Activated CD4-positive, alpha-beta T cell treated with anti-CD3 and anti-CD28 coated beads for 36 hours (primary cell): ENCODE measurements at regions of chr21 and their contacts with region 1.

Region 1: GRCh38 chr21:14454016-14455009 is 71.4 kb upstream of the HSPA13 start:
- DNase-seq: no peak
- ATAC-seq: peak; percentile 25
- H3K4me3 Mint-ChIP-seq: no peak overlapping the region
- H3K27ac Mint-ChIP-seq: peak overlapping the region; percentile 77
- H3K4me1 Mint-ChIP-seq: peaks cover 40% of the 10 kb centered on the region
- H3K27me3 Mint-ChIP-seq: no peaks in the 10 kb centered on the region

Region 2: DNA sequence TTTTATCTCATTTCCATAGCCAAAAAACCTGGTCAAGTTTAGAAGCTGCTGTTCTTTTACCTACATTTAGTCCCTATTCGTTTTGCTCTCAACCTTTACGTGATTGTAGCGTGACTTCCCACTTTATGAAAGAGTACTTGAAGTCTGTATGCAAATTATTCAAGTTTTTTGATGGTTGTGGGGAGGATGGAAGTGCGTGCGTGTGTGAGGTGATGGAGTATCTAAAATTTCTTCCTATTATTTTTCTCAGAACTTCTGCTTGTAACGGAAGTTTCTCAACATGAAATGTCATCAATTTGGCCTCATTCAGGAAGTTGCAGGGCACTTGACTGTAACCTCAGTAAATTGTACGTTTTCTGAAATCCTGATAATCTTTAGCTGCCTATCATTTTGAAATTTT is 27.9 kb after region 1 on chr21:
- CTCF ChIA-PET with region 1: no interaction called
- POLR2A ChIA-PET with region 1: no interaction called
- intact Hi-C with region 1: loop called (anchors 2 kb)
- DNase-seq: peak; percentile 21
- ATAC-seq: peak; percentile 79
- H3K4me3 Mint-ChIP-seq: peak overlapping the region; percentile 42
- H3K27ac Mint-ChIP-seq: peak overlapping the region; percentile 90
- H3K4me1 Mint-ChIP-seq: peaks cover 51% of the 10 kb centered on the region
- H3K27me3 Mint-ChIP-seq: no peaks in the 10 kb centered on the region

Region 3: GRCh38 chr21:14487490-14488432 is 33.4 kb after region 1 on chr21:
- CTCF ChIA-PET with region 1: interaction called, 3 read pairs
- POLR2A ChIA-PET with region 1: no interaction called
- intact Hi-C with region 1: loop called in 1 of 2 experiments (anchors 2 kb)
- DNase-seq: no peak
- ATAC-seq: peak; percentile 72
- H3K4me3 Mint-ChIP-seq: no peak overlapping the region
- H3K27ac Mint-ChIP-seq: peak overlapping the region; percentile 68
- H3K4me1 Mint-ChIP-seq: peaks cover 56% of the 10 kb centered on the region
- H3K27me3 Mint-ChIP-seq: no peaks in the 10 kb centered on the region

Region 4: GRCh38 chr21:14523234-14523633 is 68.9 kb after region 1 on chr21:
- CTCF ChIA-PET with region 1: no interaction called
- POLR2A ChIA-PET with region 1: interaction called, 5 read pairs
- intact Hi-C with region 1: loop called in 1 of 2 experiments (anchors 2 kb)
- DNase-seq: peak; percentile 64
- ATAC-seq: peak; percentile 79
- H3K4me3 Mint-ChIP-seq: peak overlapping the region; percentile 59
- H3K27ac Mint-ChIP-seq: peak overlapping the region; percentile 91
- H3K4me1 Mint-ChIP-seq: peaks cover 62% of the 10 kb centered on the region
- H3K27me3 Mint-ChIP-seq: no peaks in the 10 kb centered on the region

Region 5: GRCh38 chr21:14533504-14534428 is 79.5 kb after region 1 on chr21:
- CTCF ChIA-PET with region 1: no interaction called
- POLR2A ChIA-PET with region 1: no interaction called
- intact Hi-C with region 1: loop called (anchors 2 kb)
- DNase-seq: peak; percentile 21
- ATAC-seq: peak; percentile 78
- H3K4me3 Mint-ChIP-seq: peak overlapping the region; percentile 83
- H3K27ac Mint-ChIP-seq: peak overlapping the region; percentile 100
- H3K4me1 Mint-ChIP-seq: peaks cover 80% of the 10 kb centered on the region
- H3K27me3 Mint-ChIP-seq: no peaks in the 10 kb centered on the region

Region 6: GRCh38 chr21:14567331-14568279 is 113.3 kb after region 1 on chr21:
- CTCF ChIA-PET with region 1: no interaction called
- POLR2A ChIA-PET with region 1: no interaction called
- intact Hi-C with region 1: no loop called
- DNase-seq: no peak
- ATAC-seq: no peak
- H3K4me3 Mint-ChIP-seq: no peak overlapping the region
- H3K27ac Mint-ChIP-seq: no peak overlapping the region
- H3K4me1 Mint-ChIP-seq: peaks cover 5% of the 10 kb centered on the region
- H3K27me3 Mint-ChIP-seq: no peaks in the 10 kb centered on the region

Region 7: DNA sequence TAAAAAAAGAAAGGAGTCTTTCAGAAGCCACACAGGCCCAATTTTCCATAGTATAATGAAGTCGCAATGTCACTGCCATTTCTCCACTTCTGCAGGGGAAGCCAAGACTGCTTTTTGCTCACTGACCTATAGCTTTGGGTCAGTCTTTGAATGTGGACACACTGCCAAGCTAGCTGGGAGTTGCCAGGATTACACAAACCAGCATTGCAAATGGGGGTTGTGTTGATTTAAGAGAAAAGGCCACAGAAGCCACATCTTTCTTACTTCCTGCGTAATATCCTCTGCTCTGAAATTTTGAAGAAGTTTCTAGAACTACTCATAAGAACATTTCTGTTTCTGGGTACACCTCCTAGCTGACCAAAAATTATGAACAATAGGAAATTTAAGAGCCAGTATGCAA is 137.6 kb after region 1 on chr21:
- CTCF ChIA-PET with region 1: no interaction called
- POLR2A ChIA-PET with region 1: no interaction called
- intact Hi-C with region 1: loop called in 1 of 2 experiments (anchors 2 kb)
- DNase-seq: no peak
- ATAC-seq: peak; percentile 40
- H3K4me3 Mint-ChIP-seq: no peak overlapping the region
- H3K27ac Mint-ChIP-seq: peak overlapping the region; percentile 32
- H3K4me1 Mint-ChIP-seq: peaks cover 26% of the 10 kb centered on the region
- H3K27me3 Mint-ChIP-seq: no peaks in the 10 kb centered on the region

Region 8: GRCh38 chr21:14630556-14631069 is 176.3 kb after region 1 on chr21:
- CTCF ChIA-PET with region 1: no interaction called
- POLR2A ChIA-PET with region 1: no interaction called
- intact Hi-C with region 1: loop called in 1 of 2 experiments (anchors 1 kb)
- DNase-seq: no peak
- ATAC-seq: peak; percentile 90
- H3K4me3 Mint-ChIP-seq: peak overlapping the region; percentile 19
- H3K27ac Mint-ChIP-seq: peak overlapping the region; percentile 77
- H3K4me1 Mint-ChIP-seq: peaks cover 16% of the 10 kb centered on the region
- H3K27me3 Mint-ChIP-seq: no peaks in the 10 kb centered on the region